AG04450 (cell line): ENCODE measurements at regions of chr4 and their contacts with region 1.

Region 1: GRCh38 chr4:20248155-20248558 is 3.5 kb upstream of the SLIT2 start:
- DNase-seq: peak; percentile 55
- H3K4me3 ChIP-seq: no peak overlapping the region
- H3K27ac ChIP-seq: no peak overlapping the region
- H3K27me3 ChIP-seq: no peaks in the 10 kb centered on the region
- CTCF ChIP-seq: peak; percentile 81

Region 2: GRCh38 chr4:19224820-19225219 is 1023.3 kb before region 1 on chr4:
- CTCF ChIA-PET with region 1: interaction called, 23 read pairs
- POLR2A ChIA-PET with region 1: no interaction called
- DNase-seq: no peak
- H3K4me3 ChIP-seq: no peak overlapping the region
- H3K27ac ChIP-seq: no peak overlapping the region
- H3K27me3 ChIP-seq: no peaks in the 10 kb centered on the region
- CTCF ChIP-seq: peak; percentile 39

Region 3: DNA sequence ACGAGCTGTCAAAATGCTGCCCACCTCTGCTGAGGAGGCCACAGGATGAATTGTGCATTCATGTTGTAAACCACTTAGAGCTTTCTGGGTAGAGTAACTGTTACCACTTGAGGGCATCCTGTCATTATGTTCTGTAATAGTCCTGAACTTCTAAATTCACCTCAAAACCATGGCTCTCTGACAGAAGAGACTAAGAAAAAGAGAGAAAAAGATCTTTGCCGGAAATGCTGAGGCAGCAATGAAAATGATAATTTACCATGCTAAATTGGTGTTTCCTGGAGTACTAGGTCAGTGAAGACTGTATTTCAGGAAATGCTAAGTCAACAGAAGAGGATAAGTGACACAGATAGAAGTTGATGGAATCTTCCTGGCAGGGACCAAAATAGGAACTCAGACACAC is 938.8 kb before region 1 on chr4:
- CTCF ChIA-PET with region 1: interaction called, 17 read pairs
- POLR2A ChIA-PET with region 1: no interaction called
- DNase-seq: peak; percentile 11
- H3K4me3 ChIP-seq: no peak overlapping the region
- H3K27ac ChIP-seq: no peak overlapping the region
- H3K27me3 ChIP-seq: no peaks in the 10 kb centered on the region
- CTCF ChIP-seq: peak; percentile 55

Region 4: DNA sequence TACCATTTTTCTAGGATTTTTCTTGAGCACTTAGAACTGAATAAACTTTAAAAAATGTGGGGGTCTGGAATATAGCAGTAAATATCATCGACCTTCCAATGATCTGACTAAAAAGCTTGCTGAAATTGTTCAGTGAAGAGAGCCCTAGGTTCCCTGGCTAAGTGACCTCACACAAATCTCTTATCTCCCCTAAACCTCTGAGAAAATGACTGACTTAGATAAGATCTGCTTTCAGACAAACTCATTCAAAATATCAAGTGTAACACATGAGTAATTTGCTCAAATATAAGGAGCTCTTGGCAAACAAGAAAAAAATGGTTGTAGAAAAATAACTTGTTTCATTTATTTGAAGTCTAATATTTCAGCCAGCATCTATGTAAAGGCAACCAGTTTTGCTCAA is 438.2 kb before region 1 on chr4:
- CTCF ChIA-PET with region 1: interaction called, 10 read pairs
- POLR2A ChIA-PET with region 1: no interaction called
- DNase-seq: no peak
- H3K4me3 ChIP-seq: no peak overlapping the region
- H3K27ac ChIP-seq: no peak overlapping the region
- H3K27me3 ChIP-seq: no peaks in the 10 kb centered on the region
- CTCF ChIP-seq: no peak

Region 5: DNA sequence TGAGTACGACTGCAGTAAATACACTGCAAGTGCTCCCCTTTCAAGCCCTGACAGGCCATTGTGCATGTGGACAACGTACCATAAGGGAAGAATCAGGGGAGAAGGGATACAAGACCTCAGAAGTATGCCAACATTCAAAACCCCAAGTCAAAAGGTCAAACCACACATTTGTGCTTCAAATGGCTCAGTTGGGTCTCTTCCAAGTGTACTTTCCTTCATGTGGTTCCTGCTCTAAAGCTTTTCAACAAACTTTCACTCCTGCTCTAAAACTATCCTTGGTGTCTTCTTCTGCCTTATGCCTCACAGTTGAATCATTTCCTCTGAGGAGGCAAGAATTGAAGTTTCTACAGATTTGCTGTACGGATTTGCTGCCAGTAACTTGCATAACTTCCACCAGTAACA is 302.2 kb before region 1 on chr4:
- CTCF ChIA-PET with region 1: interaction called, 10 read pairs
- POLR2A ChIA-PET with region 1: no interaction called
- DNase-seq: peak; percentile 94
- H3K4me3 ChIP-seq: no peak overlapping the region
- H3K27ac ChIP-seq: peak overlapping the region; percentile 43
- H3K27me3 ChIP-seq: peaks cover 3% of the 10 kb centered on the region
- CTCF ChIP-seq: no peak

Region 6: DNA sequence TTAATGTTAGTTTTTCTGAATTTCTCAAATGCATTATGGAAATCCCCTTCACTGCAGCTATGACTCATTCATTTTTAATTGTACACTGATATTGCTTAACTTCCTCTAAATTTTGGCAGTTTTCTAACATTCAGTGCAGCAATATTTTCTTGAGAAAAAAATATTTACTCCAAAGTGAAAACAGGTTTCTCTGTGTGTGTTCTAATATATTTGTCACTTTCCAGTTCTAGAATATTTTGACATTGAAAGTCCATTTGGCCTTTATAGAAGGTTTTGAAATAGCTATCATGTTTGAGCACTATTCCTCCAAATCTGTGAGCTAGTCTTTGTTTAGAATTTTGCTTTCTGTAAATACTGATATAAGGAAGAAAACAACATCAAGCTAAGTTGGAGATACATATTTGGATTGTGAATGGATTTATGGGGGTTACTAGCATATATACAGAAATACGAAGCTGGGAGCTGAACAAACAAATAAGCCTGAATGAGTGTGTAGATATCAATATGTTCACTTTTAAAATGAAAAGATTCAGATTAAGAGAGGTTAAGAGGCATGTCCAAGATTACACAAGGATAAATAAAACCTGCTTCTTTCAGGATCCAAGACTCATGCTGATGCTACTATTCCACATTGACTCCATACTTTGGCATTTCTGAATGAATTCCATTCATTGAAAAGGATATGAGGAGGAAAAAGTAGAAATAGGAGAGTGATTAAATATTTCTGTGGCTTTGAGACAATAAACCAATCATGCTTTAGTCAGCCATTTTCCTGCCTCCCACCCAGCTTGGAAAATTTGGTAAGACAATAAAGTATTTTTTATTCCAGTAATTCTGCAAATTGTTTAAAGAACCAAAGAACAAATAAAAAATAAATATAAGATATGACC is 53.8 kb before region 1 on chr4:
- CTCF ChIA-PET with region 1: interaction called, 14 read pairs
- POLR2A ChIA-PET with region 1: no interaction called
- DNase-seq: peak; percentile 56
- H3K4me3 ChIP-seq: no peak overlapping the region
- H3K27ac ChIP-seq: no peak overlapping the region
- H3K27me3 ChIP-seq: no peaks in the 10 kb centered on the region
- CTCF ChIP-seq: no peak

Region 7: GRCh38 chr4:20237894-20238537 is 10.1 kb before region 1 on chr4:
- CTCF ChIA-PET with region 1: interaction called, 13 read pairs
- POLR2A ChIA-PET with region 1: no interaction called
- DNase-seq: no peak
- H3K4me3 ChIP-seq: no peak overlapping the region
- H3K27ac ChIP-seq: no peak overlapping the region
- H3K27me3 ChIP-seq: no peaks in the 10 kb centered on the region
- CTCF ChIP-seq: no peak

Region 8: GRCh38 chr4:20378181-20378580 is 130.0 kb after region 1 on chr4:
- CTCF ChIA-PET with region 1: no interaction called
- POLR2A ChIA-PET with region 1: no interaction called
- DNase-seq: no peak
- H3K4me3 ChIP-seq: no peak overlapping the region
- H3K27ac ChIP-seq: no peak overlapping the region
- H3K27me3 ChIP-seq: no peaks in the 10 kb centered on the region
- CTCF ChIP-seq: no peak

Region 9: DNA sequence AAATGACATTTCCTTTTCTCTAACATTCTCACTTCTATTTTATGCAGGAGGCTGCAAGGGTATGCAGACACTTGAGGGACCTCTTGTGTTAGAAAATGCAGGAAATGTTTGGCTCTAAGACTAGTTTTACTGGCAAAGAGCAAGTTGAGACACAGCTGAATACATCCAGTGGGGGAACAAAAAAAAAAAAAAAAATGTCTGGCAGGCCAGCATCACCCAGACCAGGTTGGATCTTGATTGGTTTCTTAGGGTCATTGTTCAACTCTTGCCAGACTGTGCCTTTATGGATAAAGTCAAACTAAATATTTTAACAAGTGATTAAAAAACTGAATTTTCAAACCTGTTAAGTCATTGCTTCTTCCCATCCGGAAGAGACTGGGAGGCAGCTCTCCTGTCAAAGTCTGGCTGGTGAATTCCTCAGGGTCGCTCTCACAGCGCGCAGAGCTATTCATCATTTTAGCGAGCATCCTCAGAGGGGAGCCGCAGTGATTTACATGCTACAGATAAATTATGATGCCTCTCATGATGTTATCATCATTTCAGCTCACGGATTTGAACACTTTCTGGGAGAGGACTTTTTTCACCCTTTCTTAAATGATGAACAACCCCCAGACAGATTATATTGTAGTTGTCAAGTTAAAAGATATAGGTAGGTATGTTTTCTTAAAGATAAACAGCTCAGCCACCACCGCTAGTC is 428.5 kb after region 1 on chr4:
- CTCF ChIA-PET with region 1: no interaction called
- POLR2A ChIA-PET with region 1: no interaction called
- DNase-seq: no peak
- H3K4me3 ChIP-seq: no peak overlapping the region
- H3K27ac ChIP-seq: no peak overlapping the region
- H3K27me3 ChIP-seq: peaks cover 14% of the 10 kb centered on the region
- CTCF ChIP-seq: no peak

Region 10: DNA sequence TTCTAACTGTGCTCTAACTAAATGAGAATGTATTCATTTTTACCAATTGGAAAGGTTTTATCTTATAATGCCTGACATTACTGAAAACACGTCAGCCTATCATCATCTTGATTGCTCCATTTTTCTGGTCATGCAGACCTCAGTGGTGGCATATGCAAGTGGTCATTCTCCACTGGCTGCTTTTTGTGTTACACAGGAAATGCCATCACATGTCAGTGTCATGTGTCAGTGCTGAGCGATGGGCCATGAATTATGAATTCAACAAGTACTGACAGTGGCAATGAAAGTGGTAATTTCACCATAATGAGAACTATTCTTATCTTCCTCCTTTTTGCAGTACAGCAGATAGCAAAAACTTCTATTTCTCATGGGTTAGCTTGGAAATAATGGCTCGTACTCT is 642.6 kb after region 1 on chr4:
- CTCF ChIA-PET with region 1: no interaction called
- POLR2A ChIA-PET with region 1: no interaction called
- DNase-seq: no peak
- H3K4me3 ChIP-seq: no peak overlapping the region
- H3K27ac ChIP-seq: no peak overlapping the region
- H3K27me3 ChIP-seq: no peaks in the 10 kb centered on the region
- CTCF ChIP-seq: no peak